Right cardiac atrium (tissue), 5 donors: ENCODE measurements at regions of chr11 and their contacts with region 1.

Region 1: GRCh38 chr11:128893578-128894285 is 2.6 kb downstream of the KCNJ5 start:
- DNase-seq: no peak
- ATAC-seq: peak; percentile 31 to 38
- H3K4me3 ChIP-seq: no peak overlapping the region
- H3K27ac ChIP-seq: peak overlapping the region; percentile 90
- H3K4me1 ChIP-seq: peaks cover 2% of the 10 kb centered on the region
- H3K27me3 ChIP-seq: no peaks in the 10 kb centered on the region

Region 2: DNA sequence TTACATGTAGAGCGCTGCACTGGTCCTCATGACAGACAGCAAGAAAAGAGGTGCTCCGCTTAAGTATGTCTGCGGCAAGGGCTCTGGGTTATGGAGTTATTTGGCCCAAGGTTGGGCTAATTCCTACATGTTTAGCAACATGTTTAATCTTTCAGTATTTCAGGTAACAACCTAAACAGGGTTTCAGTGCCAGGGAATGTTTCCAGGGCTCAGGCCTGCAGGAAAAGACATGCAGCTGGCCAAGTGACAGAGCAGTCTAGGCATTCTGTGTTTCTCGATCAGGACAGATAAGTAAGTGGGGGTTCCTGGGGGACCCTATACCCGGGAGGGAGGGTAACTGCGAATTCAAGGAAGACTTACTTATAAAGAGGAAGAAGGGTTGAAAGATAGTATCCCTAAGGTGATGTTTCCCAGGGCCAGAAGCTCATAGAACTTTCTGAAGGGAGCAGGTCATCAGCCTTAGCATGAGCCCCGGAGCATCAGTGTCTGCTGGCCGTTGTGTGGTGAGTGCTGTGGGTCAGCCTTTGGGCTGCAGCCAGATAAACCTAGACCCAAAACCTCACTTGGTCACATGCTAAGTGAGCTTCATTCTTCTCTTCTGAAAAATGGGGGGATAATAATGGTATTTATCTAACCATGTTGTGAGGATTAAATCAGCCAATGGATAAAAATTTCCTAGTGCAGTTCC is 15.8 kb after region 1 on chr11:
- intact Hi-C with region 1: loop called in 1 of 4 experiments (anchors 2 kb)
- DNase-seq: no peak
- ATAC-seq: no peak
- H3K4me3 ChIP-seq: no peak overlapping the region
- H3K27ac ChIP-seq: no peak overlapping the region
- H3K4me1 ChIP-seq: peaks cover 8% of the 10 kb centered on the region
- H3K27me3 ChIP-seq: no peaks in the 10 kb centered on the region

Region 3: DNA sequence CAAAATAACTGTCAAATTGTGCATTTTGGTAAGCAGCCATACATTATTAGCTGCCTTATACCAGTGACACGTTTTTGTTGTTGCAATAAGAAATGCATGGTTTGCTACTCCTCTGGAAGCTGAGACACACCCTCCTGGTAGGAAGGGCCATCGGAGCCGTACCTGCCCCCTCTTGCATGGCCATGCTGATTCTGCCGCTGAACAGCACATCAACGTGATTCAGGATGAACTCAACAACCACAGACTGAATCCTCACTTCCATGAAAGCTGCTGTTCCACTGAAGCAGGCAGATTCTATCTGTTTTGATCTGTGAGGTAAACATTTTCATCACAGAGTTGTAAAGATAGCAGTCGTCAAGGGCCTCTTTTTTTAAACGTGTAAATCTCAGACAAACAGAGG is 87.5 kb after region 1 on chr11:
- intact Hi-C with region 1: no loop called
- DNase-seq: no peak
- ATAC-seq: no peak
- H3K4me3 ChIP-seq: no peak overlapping the region
- H3K27ac ChIP-seq: no peak overlapping the region
- H3K4me1 ChIP-seq: no peaks in the 10 kb centered on the region
- H3K27me3 ChIP-seq: no peaks in the 10 kb centered on the region